Heart left ventricle (tissue), 16 donors: ENCODE measurements at regions of chr11 and their contacts with region 1.

Region 1: GRCh38 chr11:63212742-63213141 is 30.7 kb downstream of the SLC22A25 start:
- DNase-seq: no peak
- ATAC-seq: no peak
- H3K4me3 ChIP-seq: no peak overlapping the region
- H3K27ac ChIP-seq: no peak overlapping the region
- H3K4me1 ChIP-seq: no peaks in the 10 kb centered on the region
- H3K27me3 ChIP-seq: no peaks in the 10 kb centered on the region
- CTCF ChIP-seq: peak; percentile 16 to 53 (median 40)
- POLR2A ChIP-seq: no peak

Region 2: GRCh38 chr11:62678770-62679696 is 533.7 kb before region 1 on chr11 and contains the start of gene UBXN1:
- intact Hi-C with region 1: no loop called
- DNase-seq: peak; percentile 93 to 96 (median 94)
- ATAC-seq: peak; percentile 79 to 92 (median 90)
- H3K4me3 ChIP-seq: peak within 1 kb of the TSS; percentile 61 to 100 (median 94)
- H3K27ac ChIP-seq: peak within 1 kb of the TSS; percentile 76 to 96 (median 89)
- H3K4me1 ChIP-seq: peaks cover 6 to 45% (median 21%) of the 10 kb centered on the region in 12 donors
- H3K27me3 ChIP-seq: no peaks in the 10 kb centered on the region
- CTCF ChIP-seq: no peak
- POLR2A ChIP-seq: peak in 1 of 2 donors; percentile 73
- total RNA-seq, gene UBXN1: 69.2 to 116 (median 83.1) TPM

Region 3: DNA sequence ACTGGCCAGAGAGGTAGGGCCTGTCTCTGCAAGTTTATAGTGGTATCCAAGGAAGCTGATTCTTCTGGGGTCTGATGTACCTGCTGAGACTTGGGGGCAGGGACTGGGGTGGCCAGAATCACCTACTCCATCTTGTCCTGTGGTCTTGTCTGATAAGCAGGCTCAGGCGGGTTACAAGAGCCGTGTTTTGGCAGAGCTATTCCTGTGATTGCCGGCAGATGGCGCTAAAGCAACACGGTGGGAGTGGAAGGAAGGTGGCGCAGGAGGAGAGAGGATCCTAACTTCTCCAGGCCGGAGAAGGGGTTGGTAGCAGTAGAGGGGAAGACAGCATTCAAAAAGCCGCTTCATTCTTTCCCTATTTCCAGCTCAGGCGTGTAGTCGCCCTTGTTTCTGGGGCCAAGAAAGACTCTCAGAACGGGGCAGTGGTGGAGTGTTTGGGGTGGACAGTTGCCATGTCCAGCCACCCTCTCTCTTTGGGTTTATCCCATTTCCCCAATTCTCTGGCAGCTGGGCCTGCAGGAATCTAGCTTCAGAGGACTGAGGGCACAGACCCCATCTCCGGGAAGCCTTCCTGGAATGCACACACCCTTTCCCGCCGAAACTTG is 306.7 kb before region 1 on chr11:
- intact Hi-C with region 1: loop called in 4 of 10 experiments (anchors 5 to 10 kb)
- DNase-seq: peak; percentile 66 to 85 (median 78)
- ATAC-seq: peak in 3 of 4 donors; percentile 78 to 82 (median 79)
- H3K4me3 ChIP-seq: no peak overlapping the region
- H3K27ac ChIP-seq: no peak overlapping the region
- H3K4me1 ChIP-seq: peaks cover 0 to 30% (median 12%) of the 10 kb centered on the region in 12 donors
- H3K27me3 ChIP-seq: peaks cover 0 to 3% (median 0%) of the 10 kb centered on the region in 9 donors
- CTCF ChIP-seq: peak in 11 of 12 donors; percentile 94 to 99 (median 97)
- POLR2A ChIP-seq: no peak

Region 4: GRCh38 chr11:63023841-63024648 is 188.7 kb before region 1 on chr11:
- intact Hi-C with region 1: loop called in 1 of 10 experiments (anchors 10 kb)
- DNase-seq: peak; percentile 81 to 91 (median 84)
- ATAC-seq: peak; percentile 79 to 94 (median 92)
- H3K4me3 ChIP-seq: peak overlapping the region in 1 of 12 donors; percentile 6
- H3K27ac ChIP-seq: no peak overlapping the region
- H3K4me1 ChIP-seq: peaks cover 0 to 10% (median 1%) of the 10 kb centered on the region in 12 donors
- H3K27me3 ChIP-seq: peaks cover 0 to 10% (median 0%) of the 10 kb centered on the region in 9 donors
- CTCF ChIP-seq: peak; percentile 99 to 100 (median 99)
- POLR2A ChIP-seq: no peak

Region 5: DNA sequence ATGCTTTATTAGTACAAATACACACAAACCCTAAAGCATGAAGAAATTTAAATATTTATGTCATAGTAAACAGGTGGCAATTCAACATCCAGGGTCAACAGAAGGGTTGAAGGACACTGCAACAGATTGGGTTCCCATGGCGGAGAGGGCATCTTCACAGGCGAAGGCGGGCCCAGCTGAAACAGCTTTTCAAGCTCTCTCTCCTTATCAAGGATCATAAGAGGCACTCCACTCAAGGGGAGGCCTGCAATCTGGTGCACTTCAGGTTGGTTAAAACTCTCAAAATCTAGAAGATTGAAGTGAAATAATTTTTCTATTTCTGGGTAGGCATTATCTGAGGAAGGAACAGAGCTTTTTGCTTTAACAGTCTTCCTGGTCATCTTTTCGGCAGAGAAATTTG is 180.3 kb before region 1 on chr11:
- intact Hi-C with region 1: loop called in 5 of 10 experiments (anchors 5 to 10 kb)
- DNase-seq: no peak
- ATAC-seq: no peak
- H3K4me3 ChIP-seq: no peak overlapping the region
- H3K27ac ChIP-seq: no peak overlapping the region
- H3K4me1 ChIP-seq: peaks cover 0 to 4% (median 0%) of the 10 kb centered on the region in 12 donors
- H3K27me3 ChIP-seq: peaks cover 0 to 13% (median 0%) of the 10 kb centered on the region in 9 donors
- CTCF ChIP-seq: no peak
- POLR2A ChIP-seq: no peak

Region 6: GRCh38 chr11:63042596-63042995 is 170.1 kb before region 1 on chr11:
- intact Hi-C with region 1: loop called in 4 of 10 experiments (anchors 5 to 10 kb)
- DNase-seq: no peak
- ATAC-seq: no peak
- H3K4me3 ChIP-seq: no peak overlapping the region
- H3K27ac ChIP-seq: no peak overlapping the region
- H3K4me1 ChIP-seq: no peaks in the 10 kb centered on the region
- H3K27me3 ChIP-seq: peaks cover 0 to 7% (median 0%) of the 10 kb centered on the region in 9 donors
- CTCF ChIP-seq: no peak
- POLR2A ChIP-seq: no peak

Region 7: GRCh38 chr11:63132985-63133775 is 79.6 kb before region 1 on chr11:
- intact Hi-C with region 1: loop called in 5 of 10 experiments (anchors 5 to 10 kb)
- DNase-seq: no peak
- ATAC-seq: no peak
- H3K4me3 ChIP-seq: no peak overlapping the region
- H3K27ac ChIP-seq: no peak overlapping the region
- H3K4me1 ChIP-seq: no peaks in the 10 kb centered on the region
- H3K27me3 ChIP-seq: peaks cover 0 to 5% (median 0%) of the 10 kb centered on the region in 9 donors
- CTCF ChIP-seq: no peak
- POLR2A ChIP-seq: no peak

Region 8: GRCh38 chr11:63146581-63146980 is 66.2 kb before region 1 on chr11:
- intact Hi-C with region 1: no loop called
- DNase-seq: no peak
- ATAC-seq: no peak
- H3K4me3 ChIP-seq: no peak overlapping the region
- H3K27ac ChIP-seq: no peak overlapping the region
- H3K4me1 ChIP-seq: peaks cover 0 to 6% (median 0%) of the 10 kb centered on the region in 12 donors
- H3K27me3 ChIP-seq: no peaks in the 10 kb centered on the region
- CTCF ChIP-seq: no peak
- POLR2A ChIP-seq: no peak